Right ventricle myocardium inferior (tissue), 1 donor: ENCODE measurements at regions of chr20 and their contacts with region 1.

Region 1: GRCh38 chr20:57407541-57407956 is 16.4 kb downstream of the RBM38 start:
- DNase-seq: peak; percentile 70
- ATAC-seq: peak; percentile 68

Region 2: DNA sequence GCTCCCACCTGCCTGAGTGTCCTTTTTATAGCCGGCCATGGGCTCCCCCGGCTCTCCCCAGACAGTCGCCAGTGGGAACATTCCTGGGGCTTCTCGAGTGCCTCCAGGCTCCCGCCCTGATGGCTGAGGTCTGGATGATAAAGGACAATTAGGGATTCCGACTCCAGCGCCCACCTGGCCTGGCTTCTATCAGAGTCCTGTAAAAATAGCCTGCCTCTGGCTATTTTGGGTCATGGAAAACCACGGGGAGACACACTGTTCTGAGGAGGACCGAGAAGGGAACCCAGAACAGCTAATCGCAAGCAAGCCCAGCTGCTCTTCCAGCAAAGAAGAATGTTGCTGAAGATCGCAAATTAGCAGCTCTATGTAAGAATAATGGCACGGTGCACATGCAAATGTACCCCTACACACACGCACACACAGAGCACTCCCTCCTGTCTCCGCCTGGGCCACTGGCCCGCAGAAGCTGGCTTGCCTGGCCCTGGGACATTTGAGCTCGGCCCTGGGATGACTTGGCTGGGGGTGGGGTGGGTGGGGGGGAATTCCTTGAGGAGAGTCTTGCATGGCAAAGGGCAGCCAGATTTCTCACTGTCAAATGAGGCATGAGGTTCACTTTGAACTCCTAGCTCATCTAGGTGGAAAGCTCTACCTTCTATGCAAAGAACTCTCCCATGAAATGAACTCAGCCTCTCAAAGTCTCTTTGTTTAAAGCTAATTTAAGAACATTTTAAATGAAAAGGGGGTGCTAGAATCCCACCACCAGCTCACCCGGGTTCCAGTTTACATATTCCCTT is 62.1 kb after region 1 on chr20:
- intact Hi-C with region 1: loop called (anchors 2 kb)
- DNase-seq: no peak
- ATAC-seq: peak; percentile 84

Region 3: DNA sequence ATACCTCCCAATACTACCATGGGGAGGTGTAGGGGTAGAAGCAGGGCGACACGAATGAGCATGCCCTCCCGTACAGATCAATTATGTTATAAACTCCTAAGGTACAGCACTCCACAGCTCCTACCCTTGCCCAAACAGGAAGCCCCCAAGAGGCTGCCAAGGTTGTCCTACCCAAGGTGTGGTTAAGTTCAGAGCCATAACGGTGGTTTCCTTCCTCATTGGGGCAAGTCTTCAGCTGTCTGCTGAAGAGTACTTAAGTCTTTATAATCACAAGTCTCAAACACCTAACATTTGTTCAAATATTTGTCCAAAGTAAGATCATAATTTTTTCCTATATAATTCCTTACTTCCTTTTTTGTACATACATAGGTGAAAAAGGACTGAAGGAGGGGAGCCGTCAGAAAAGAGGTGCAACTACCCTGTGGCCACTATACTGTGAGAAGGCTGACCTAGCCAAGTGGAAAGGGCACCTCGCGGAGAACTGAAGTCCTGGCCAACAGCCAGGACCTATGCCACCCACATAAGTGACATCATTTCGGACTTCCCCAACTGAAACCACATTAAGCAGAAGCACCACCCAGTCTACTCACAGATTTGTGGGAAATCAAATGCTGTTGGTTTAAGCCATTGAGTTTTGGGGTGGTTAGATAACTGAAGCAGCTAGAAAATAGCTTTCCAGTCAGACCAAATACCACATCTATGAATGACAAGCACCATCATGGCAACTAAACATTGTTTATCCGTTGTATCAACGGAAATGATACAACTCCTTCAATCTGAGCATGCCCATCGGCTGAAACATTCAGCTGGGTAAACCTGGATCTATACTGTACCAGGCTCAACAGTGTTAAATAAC is 899.1 kb after region 1 on chr20:
- intact Hi-C with region 1: no loop called
- DNase-seq: peak; percentile 73
- ATAC-seq: no peak